Esophagus muscularis mucosa (tissue), 4 donors: ENCODE measurements at regions of chr17 and their contacts with region 1.

Region 1: DNA sequence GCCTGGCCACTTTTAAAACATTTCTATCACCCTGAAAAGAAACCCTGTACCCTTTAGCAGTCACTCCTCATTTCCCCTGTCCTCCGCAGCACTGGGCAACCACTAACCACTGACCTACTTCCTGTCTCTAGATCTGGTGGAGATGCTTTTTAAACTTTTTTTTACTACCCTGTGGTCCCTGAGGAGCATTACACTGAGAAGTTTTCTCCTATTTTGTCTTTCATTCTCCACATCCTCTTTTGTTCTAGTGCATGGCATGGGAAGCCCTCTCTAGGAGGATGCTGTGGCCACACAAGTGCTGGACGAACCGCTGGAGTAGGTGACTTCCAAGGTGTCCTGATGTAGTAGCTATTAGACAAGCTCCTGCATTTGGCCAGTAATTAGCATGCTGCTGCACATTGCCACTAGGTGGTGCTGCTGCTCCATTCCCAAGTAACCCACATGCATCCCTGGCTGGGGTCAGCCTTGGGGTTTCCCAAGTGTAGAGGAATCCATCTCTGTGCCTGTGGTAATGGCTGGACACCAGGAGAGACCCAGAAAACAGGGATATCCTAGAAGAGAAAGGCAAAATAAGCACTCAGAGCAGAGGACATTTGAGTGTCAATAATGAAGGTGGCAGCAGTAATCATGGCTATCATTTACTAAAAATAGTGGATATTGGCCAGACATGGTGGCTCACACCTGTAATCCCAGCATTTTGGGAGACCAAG is 143.8 kb upstream of the CRHR1 start:
- DNase-seq: no peak
- H3K4me3 ChIP-seq: no peak overlapping the region
- H3K27ac ChIP-seq: no peak overlapping the region
- H3K4me1 ChIP-seq: no peaks in the 10 kb centered on the region
- H3K27me3 ChIP-seq: no peaks in the 10 kb centered on the region
- CTCF ChIP-seq: peak; percentile 86 to 98 (median 93)
- EP300 ChIP-seq: no peak
- POLR2A ChIP-seq: no peak

Region 2: GRCh38 chr17:45692661-45693060 is 52.4 kb after region 1 on chr17:
- intact Hi-C with region 1: no loop called
- DNase-seq: no peak
- H3K4me3 ChIP-seq: no peak overlapping the region
- H3K27ac ChIP-seq: no peak overlapping the region
- H3K4me1 ChIP-seq: no peaks in the 10 kb centered on the region
- H3K27me3 ChIP-seq: peaks cover 0 to 79% (median 2%) of the 10 kb centered on the region in 4 donors
- CTCF ChIP-seq: no peak
- EP300 ChIP-seq: no peak
- POLR2A ChIP-seq: no peak

Region 3: DNA sequence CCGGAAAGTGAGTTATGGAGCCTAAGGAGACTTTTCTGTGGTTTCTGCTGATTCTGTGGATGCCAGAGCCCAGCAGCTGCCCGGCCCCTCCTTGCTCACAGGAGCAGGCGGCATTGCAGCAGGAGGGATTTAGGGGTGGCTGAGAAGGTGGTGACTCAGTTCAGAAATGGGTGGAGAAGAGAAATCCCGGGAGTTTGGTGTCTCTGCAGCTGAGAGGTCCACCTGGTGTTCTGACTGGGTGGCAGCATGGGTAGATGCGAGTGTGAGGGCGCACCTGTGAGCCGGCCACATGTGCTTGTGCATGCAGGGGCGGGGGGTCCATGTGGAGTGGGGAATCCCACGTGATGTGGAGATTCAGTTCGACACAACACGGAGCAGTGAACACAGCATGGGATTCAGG is 188.3 kb after region 1 on chr17:
- intact Hi-C with region 1: loop called (anchors 1 kb)
- DNase-seq: no peak
- H3K4me3 ChIP-seq: no peak overlapping the region
- H3K27ac ChIP-seq: no peak overlapping the region
- H3K4me1 ChIP-seq: no peaks in the 10 kb centered on the region
- H3K27me3 ChIP-seq: peaks cover 0 to 80% (median 2%) of the 10 kb centered on the region in 4 donors
- CTCF ChIP-seq: no peak
- EP300 ChIP-seq: no peak
- POLR2A ChIP-seq: no peak